ENCODE measurements at regions of chr1 and their contacts with region 1.

Region 1: GRCh38 chr1:211859405-211859804 is 28.8 kb upstream of the LPGAT1 start:
- DNase-seq: no peak
- H3K4me3 ChIP-seq: no peak overlapping the region
- CTCF ChIP-seq: no peak
- POLR2A ChIP-seq: no peak

Region 2: DNA sequence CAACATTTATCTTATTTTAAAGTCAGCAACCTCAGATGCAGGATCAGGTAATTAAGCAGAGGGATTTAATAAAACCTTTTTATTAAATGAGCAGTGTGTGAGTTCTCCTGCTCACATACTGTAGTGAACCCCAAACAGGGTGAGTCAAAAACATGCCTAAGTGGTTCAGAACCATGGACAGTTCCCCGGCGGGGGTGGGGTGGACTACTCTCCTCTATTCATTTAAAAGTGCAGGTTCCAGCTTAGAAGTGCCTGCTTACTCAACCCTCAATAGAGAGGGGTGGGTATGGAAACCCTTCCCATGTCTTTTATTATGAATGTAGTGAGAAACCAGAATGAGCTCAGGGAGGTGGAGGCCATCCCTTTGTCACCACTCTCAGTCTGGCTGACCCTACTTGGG is 1132.8 kb before region 1 on chr1:
- intact Hi-C with region 1: loop called (anchors 5 kb)
- DNase-seq: no peak
- H3K4me3 ChIP-seq: no peak overlapping the region
- CTCF ChIP-seq: no peak
- POLR2A ChIP-seq: no peak

Region 3: GRCh38 chr1:212035123-212035834 is 175.9 kb after region 1 on chr1 and contains the starts of genes DTL and INTS7:
- intact Hi-C with region 1: no loop called
- DNase-seq: peak; percentile 98 to 99
- H3K4me3 ChIP-seq: peak within 1 kb of the TSS; percentile 41
- CTCF ChIP-seq: peak in 1 of 3 donors; percentile 96
- POLR2A ChIP-seq: no peak
- total RNA-seq, gene DTL: 0.23 to 1.2 (median 0.90) TPM
- total RNA-seq, gene INTS7: 8.5 to 15.5 (median 11.0) TPM

Measured in lower leg skin (tissue), 4 donors.